HCT116 (cell line): ENCODE measurements at regions of chr14 and their contacts with region 1.

Region 1: GRCh38 chr14:73458151-73458976 is at the start of gene NUMB:
- DNase-seq: peak; percentile 100
- ATAC-seq: peak; percentile 96
- H3K4me3 ChIP-seq: peak within 1 kb of the TSS; percentile 88 to 90
- H3K27ac ChIP-seq: peak within 1 kb of the TSS; percentile 62
- H3K4me1 ChIP-seq: peaks cover 6 to 19% of the 10 kb centered on the region in 2 experiments; a peak in 3 of 4 replicates
- H3K27me3 ChIP-seq: no peaks in the 10 kb centered on the region
- CTCF ChIP-seq: no peak
- POLR2A ChIP-seq: peak; percentile 85
- RAD21 ChIP-seq: no peak
- total RNA-seq, gene NUMB: 43.0 TPM

Region 2: GRCh38 chr14:73443758-73444157 is 14.6 kb before region 1 on chr14:
- CTCF ChIA-PET with region 1: interaction called, 3 read pairs
- POLR2A ChIA-PET with region 1: interaction called, 12 read pairs
- RAD21 ChIA-PET with region 1: no interaction called
- intact Hi-C with region 1: no loop called
- DNase-seq: no peak
- ATAC-seq: no peak
- H3K4me3 ChIP-seq: no peak overlapping the region
- H3K27ac ChIP-seq: no peak overlapping the region
- H3K4me1 ChIP-seq: no peaks in the 10 kb centered on the region; a peak in 1 of 4 replicates
- H3K27me3 ChIP-seq: no peaks in the 10 kb centered on the region
- CTCF ChIP-seq: no peak
- POLR2A ChIP-seq: no peak
- RAD21 ChIP-seq: no peak

Region 3: DNA sequence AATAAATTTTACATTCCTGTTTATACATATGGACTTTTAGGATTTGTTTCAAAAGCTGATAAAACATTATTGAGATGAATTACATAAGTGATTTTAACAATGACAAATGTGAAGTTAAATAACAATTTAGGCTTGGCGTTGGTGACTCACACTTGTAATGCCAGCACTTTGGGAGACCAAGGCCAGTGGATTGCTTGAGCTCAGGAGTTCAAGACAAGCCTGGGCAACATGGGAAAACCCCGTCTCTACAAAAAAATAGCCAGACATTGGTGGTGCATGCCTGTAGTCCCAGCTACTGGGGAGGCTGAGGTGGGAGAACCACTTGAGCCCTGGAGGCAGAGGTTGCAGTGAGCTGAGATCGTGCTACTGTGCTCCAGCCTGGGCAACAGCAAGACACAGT is 118.0 kb after region 1 on chr14:
- CTCF ChIA-PET with region 1: no interaction called
- POLR2A ChIA-PET with region 1: no interaction called
- RAD21 ChIA-PET with region 1: no interaction called
- intact Hi-C with region 1: no loop called
- DNase-seq: no peak
- ATAC-seq: no peak
- H3K4me3 ChIP-seq: no peak overlapping the region
- H3K27ac ChIP-seq: no peak overlapping the region
- H3K4me1 ChIP-seq: no peaks in the 10 kb centered on the region
- H3K27me3 ChIP-seq: no peaks in the 10 kb centered on the region
- CTCF ChIP-seq: no peak
- POLR2A ChIP-seq: no peak
- RAD21 ChIP-seq: no peak

Region 4: GRCh38 chr14:73743431-73743931 is 285.1 kb after region 1 on chr14:
- CTCF ChIA-PET with region 1: no interaction called
- POLR2A ChIA-PET with region 1: no interaction called
- RAD21 ChIA-PET with region 1: no interaction called
- intact Hi-C with region 1: no loop called
- DNase-seq: no peak
- ATAC-seq: no peak
- H3K4me3 ChIP-seq: no peak overlapping the region
- H3K27ac ChIP-seq: peak overlapping the region; percentile 84; the same call in 1 of the 2 replicates
- H3K4me1 ChIP-seq: peaks cover 69 to 83% of the 10 kb centered on the region in 2 experiments
- H3K27me3 ChIP-seq: no peaks in the 10 kb centered on the region
- CTCF ChIP-seq: no peak
- POLR2A ChIP-seq: no peak
- RAD21 ChIP-seq: no peak